Breast epithelium (tissue), 4 donors: ENCODE measurements at regions of chr14 and their contacts with region 1.

Region 1: DNA sequence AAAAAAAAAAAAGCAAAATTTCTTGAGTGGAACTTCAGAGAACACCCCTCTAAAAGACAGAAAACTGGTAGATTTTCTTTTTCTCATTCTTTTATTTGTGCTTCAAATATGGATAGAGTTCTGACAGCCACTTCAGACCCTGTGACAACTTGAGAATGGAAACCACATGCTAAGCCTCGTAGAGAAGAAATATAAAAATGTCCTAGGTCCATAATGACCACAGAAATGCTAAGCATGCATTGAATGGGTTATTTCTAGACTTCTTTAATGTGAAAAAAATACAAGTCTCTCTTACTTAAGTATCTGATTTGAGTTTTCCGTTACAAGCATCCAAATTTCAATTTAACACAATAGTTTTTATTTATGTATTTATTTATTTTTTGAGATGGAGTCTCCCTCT is 28.3 kb upstream of the DIO2 start:
- DNase-seq: no peak
- H3K4me3 ChIP-seq: no peak overlapping the region
- H3K27ac ChIP-seq: no peak overlapping the region
- H3K4me1 ChIP-seq: no peaks in the 10 kb centered on the region
- H3K27me3 ChIP-seq: no peaks in the 10 kb centered on the region
- CTCF ChIP-seq: no peak
- POLR2A ChIP-seq: no peak

Region 2: DNA sequence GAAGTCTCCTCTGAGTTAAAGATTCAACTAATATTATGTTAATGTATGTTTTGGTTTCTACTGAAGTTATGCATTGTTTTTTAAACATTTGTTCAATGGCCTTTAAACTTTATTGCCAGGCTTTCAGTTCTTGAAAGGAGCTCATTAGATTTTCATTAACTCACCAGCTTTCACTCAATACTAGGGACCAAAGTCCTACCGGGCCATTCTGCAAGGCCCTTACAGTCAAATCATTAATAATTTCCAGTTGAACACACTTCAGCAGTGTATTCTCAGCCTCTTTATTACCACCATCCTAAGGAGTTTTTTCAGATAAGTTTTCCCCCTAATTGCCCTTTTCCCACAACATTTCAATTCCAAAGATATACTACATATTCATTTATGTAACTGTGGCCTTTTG is 437.5 kb before region 1 on chr14:
- intact Hi-C with region 1: loop called (anchors 5 kb)
- DNase-seq: no peak
- H3K4me3 ChIP-seq: no peak overlapping the region
- H3K27ac ChIP-seq: no peak overlapping the region
- H3K4me1 ChIP-seq: no peaks in the 10 kb centered on the region
- H3K27me3 ChIP-seq: no peaks in the 10 kb centered on the region
- CTCF ChIP-seq: no peak
- POLR2A ChIP-seq: no peak

Region 3: DNA sequence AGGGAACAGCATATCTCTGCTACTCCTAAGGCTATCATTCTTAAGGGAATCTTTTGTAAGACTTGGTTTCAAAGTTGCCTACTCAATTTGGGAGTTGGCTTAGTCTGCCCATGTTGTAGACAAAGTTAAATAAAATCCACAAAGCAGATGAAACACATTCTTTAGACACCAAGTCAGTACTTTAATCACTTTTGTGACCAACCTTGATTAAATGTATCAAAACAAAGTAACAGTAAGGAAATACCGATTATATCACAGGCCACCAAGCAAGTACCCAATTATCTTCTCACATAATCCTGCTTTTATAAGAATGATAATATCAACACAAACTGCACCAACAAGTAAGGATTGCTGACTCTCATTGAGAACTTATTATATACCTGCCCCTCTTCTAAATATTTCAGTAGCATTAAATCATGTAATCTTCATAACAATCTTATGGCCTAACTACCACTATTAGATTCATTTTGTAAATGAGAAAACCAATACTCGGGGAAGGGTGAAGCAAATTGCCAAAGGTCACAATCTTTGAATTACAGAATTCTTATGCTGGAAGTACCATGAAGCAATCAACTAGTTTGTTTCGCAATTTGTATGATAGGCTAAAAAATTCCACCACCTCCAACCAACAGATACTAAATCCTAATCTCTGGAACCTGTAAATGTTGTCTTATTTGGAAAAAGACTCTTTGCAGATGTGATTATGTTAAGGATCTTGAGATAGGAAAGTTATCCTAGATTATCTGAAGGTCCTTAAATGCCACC is 15.8 kb before region 1 on chr14:
- intact Hi-C with region 1: loop called (anchors 2 kb)
- DNase-seq: no peak
- H3K4me3 ChIP-seq: no peak overlapping the region
- H3K27ac ChIP-seq: no peak overlapping the region
- H3K4me1 ChIP-seq: no peaks in the 10 kb centered on the region
- H3K27me3 ChIP-seq: no peaks in the 10 kb centered on the region
- CTCF ChIP-seq: no peak
- POLR2A ChIP-seq: no peak

Region 4: DNA sequence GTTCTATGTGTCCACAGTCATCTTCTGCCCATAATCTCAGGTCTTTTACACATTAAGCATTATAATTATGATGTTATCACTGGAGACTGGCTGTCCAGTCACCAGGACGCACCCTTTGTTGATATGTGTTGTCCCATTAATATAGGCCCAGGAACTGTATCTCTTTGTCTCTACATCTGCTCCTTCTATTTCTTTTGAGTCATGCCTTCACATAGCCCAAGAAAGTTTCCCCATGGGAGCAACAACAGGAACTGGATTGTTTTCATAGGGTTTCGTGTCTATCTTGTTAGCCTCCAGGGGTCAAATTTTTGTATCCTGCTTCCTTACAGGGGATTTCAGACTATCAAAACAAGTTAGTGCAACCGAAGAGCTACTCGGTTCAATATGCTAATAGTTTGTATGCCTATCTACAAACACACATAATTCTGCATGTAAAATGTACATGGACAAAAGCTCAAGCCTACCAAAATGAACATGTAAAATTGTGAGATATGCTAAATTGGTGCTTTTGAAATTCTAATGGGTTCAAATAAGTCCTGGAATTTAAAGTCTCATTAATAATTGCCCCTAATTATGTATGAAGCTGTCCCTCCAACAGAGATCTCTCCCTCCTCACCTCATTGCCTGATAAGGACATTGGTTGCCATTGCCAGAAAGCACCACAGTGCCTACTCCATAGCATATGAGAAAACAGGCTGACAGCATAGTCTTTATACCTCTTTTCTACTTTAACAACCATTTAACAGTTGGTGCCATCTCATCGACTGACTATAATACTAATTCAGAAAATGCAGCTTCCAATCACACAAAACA is 71.5 kb after region 1 on chr14:
- intact Hi-C with region 1: no loop called
- DNase-seq: no peak
- H3K4me3 ChIP-seq: no peak overlapping the region
- H3K27ac ChIP-seq: no peak overlapping the region
- H3K4me1 ChIP-seq: no peaks in the 10 kb centered on the region
- H3K27me3 ChIP-seq: no peaks in the 10 kb centered on the region
- CTCF ChIP-seq: no peak
- POLR2A ChIP-seq: no peak

Region 5: DNA sequence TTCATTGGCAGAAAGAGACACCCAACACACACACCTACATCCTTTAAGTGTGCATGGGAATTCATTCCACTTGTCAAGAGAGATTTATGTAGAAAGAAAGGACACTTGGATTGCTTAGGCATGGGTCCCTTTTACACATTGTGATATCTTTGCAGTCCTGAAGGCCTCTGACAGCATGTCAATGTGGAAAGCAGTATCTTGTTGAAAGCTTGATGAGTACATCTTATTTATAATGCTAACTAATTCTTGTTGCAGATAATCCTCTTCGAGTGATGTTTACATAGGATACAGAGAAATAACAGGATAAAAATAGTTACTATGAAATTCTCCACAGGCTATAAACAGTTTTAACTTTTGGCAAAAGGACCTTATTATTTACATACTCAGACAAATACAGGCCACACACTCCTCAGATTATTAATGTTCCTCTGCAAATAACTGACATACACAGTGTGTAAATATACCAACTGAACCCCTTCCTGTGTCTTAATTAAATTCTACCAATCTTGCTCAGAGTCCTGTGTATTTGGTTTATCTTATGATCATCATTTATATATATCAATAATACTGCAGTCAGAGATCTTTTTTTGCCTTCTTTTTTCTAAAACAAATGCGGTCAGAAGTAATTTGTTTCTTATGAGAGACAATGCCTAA is 83.5 kb after region 1 on chr14:
- intact Hi-C with region 1: no loop called
- DNase-seq: no peak
- H3K4me3 ChIP-seq: no peak overlapping the region
- H3K27ac ChIP-seq: no peak overlapping the region
- H3K4me1 ChIP-seq: no peaks in the 10 kb centered on the region
- H3K27me3 ChIP-seq: no peaks in the 10 kb centered on the region
- CTCF ChIP-seq: no peak
- POLR2A ChIP-seq: no peak